Activated CD8-positive, alpha-beta T cell treated with anti-CD3 and anti-CD28 coated beads, Interleukin-2, amount 10 ng/mL, durations not matched to agents 7 days and 5 days (primary cell): ENCODE measurements at regions of chrX and their contacts with region 1.

Region 1: DNA sequence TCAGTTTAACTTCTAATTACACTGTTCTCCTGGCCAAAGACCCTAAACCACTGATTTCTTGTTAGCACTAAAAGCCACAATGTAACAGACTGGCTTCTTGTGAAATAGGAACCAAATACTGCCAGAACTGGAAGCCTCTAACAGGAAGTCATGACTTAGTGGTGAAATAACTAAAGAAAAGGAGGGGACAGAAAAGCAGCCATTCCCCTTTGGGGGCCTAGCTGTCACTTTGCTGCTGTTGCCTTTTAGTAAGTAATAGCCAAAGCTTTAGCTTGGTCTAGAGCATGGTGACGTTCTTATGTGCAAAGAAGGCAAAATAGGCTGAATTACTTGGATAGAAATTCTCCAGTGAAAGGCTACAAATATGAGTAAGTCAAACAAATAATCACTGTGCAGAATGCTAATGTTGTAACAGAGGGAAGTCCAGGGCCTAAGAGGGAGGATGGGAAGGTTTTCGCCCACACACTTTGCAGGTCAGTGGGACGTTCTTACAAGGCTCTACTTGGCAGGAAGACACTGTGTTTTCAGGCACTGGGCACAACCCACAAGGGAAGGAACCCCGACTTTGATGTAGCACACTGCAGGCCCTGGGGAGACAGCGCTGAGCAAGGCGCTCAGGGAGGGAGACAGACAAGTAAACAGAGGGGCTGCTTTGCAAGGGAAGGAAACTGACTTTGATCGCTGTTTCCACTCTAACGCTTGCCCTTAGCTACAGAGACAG is 16.7 kb downstream of the GAB3 start:
- DNase-seq: peak; percentile 59
- ATAC-seq: peak; percentile 78
- H3K4me3 Mint-ChIP-seq: peak overlapping the region; percentile 70
- H3K27ac Mint-ChIP-seq: peak overlapping the region; percentile 96
- H3K4me1 Mint-ChIP-seq: peaks cover 97% of the 10 kb centered on the region
- H3K27me3 Mint-ChIP-seq: no peaks in the 10 kb centered on the region

Region 2: GRCh38 chrX:154348114-154348531 is 386.1 kb before region 1 on chrX:
- CTCF ChIA-PET with region 1: no interaction called
- POLR2A ChIA-PET with region 1: no interaction called
- DNase-seq: no peak
- ATAC-seq: no peak
- H3K4me3 Mint-ChIP-seq: no peak overlapping the region
- H3K27ac Mint-ChIP-seq: peak overlapping the region; percentile 95
- H3K4me1 Mint-ChIP-seq: peaks cover 52% of the 10 kb centered on the region
- H3K27me3 Mint-ChIP-seq: no peaks in the 10 kb centered on the region

Region 3: DNA sequence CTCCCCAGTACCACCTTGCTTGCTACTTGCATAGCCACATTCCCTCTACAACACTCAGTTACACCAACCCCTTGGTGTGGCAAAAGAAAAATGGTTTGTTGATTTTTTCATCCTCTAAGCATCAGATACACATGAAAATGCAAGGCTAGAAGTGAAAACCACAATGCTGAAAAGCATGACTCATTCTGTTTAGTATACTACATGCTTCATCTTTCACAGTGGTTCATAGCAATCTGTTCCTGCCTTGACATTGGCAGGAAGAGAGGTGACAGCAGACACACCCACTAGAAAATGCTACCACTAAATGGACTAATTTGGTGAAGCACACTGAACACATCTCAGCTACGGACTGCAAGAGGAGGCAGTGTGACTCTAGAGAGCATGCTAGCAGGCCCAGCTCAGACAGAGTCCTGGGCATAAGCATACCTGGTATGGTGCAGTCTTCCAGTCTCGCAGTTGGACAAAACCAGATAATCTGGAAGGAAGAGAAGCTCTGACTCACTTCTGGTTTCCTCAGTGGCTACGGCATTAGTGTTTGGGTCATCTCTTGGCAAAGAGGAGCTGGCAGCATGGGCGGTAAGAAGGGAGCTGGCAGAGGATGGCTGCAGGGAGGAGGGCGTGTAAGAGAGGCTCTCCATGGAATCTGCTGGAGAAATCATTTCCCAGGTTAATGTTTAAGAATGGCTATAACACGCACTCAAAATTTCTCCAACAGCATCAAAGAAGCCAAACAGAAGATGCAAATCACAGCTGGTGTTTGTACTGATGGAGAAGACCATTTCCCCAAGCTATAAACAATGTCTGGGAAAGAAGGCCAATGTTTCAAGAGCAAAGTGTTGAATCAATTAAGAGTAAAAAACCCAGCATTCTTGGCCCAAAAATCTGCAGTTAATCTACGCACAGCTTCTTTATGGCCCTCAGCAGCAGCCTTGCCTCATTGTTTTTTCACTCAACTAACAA is 21.2 kb before region 1 on chrX:
- CTCF ChIA-PET with region 1: interaction called, 35 read pairs
- POLR2A ChIA-PET with region 1: interaction called, 12 read pairs
- DNase-seq: peak; percentile 55
- ATAC-seq: peak; percentile 92
- H3K4me3 Mint-ChIP-seq: peak overlapping the region; percentile 50
- H3K27ac Mint-ChIP-seq: peak overlapping the region; percentile 82
- H3K4me1 Mint-ChIP-seq: peaks cover 62% of the 10 kb centered on the region
- H3K27me3 Mint-ChIP-seq: no peaks in the 10 kb centered on the region